Right lobe of liver (tissue), 6 donors: ENCODE measurements at regions of chr19 and their contacts with region 1.

Region 1: DNA sequence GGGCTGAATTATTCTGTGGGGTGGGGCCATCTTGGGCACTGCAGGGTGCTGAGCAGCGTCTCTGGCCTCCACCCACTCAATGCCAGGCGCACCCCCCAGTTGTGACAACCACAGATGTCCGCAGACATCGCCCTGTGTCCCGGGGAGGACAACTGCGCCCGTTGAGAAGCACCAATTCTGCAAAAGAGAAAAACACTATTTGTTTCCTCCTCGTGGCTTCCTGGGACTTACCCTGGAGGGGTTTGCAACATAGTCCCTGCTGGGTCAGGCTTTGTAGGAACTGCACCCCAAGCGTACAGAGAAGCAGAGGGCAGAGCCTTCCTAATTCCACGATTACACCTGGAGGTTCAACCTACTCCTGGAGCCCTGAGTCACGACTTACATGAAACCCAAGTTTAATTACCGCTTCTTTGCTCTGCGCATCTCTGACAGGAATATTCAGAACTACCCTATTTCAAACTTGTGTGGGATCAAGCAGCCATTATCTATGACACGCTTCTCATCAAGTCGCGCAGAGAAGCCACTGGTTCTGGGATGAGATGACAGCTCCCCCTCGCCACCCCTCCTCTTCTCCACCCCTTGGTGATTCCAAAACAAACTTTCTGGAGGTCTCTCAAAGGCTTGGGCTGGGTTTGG is 11.1 kb upstream of the SLC39A3 start:
- DNase-seq: no peak
- ATAC-seq: no peak
- H3K4me3 ChIP-seq: no peak overlapping the region
- H3K27ac ChIP-seq: no peak overlapping the region
- H3K4me1 ChIP-seq: no peaks in the 10 kb centered on the region
- H3K27me3 ChIP-seq: no peaks in the 10 kb centered on the region
- CTCF ChIP-seq: no peak
- POLR2A ChIP-seq: no peak

Region 2: GRCh38 chr19:2648528-2648937 is 102.4 kb before region 1 on chr19:
- intact Hi-C with region 1: loop called in 1 of 2 experiments (anchors 10 kb)
- DNase-seq: peak; percentile 75 to 85 (median 80)
- ATAC-seq: peak; percentile 97 to 100 (median 98)
- H3K4me3 ChIP-seq: no peak overlapping the region
- H3K27ac ChIP-seq: no peak overlapping the region
- H3K4me1 ChIP-seq: no peaks in the 10 kb centered on the region
- H3K27me3 ChIP-seq: no peaks in the 10 kb centered on the region
- CTCF ChIP-seq: peak; percentile 81 to 97 (median 92)
- POLR2A ChIP-seq: no peak

Region 3: DNA sequence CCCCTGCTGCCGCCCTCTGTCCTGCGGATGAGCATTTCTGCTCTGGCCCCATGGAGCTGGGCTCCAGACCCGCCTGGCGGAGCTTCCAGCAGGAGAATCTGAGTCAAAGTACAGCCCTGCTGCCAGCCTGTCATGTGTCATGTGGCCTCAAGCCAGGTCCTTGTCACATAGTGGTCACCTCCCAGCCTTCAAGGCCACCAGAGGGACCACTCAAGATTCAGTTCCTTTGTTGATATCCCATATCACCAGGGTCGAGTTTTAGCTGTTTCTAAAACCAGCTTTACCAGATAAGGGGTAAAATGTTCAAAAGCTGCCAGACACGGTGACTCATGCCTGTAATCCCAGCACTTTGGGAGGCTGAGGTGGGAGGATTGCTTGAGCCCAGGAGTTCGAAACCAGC is 47.8 kb after region 1 on chr19:
- intact Hi-C with region 1: no loop called
- DNase-seq: peak in 1 of 3 donors; percentile 69
- ATAC-seq: peak; percentile 49 to 71 (median 68)
- H3K4me3 ChIP-seq: no peak overlapping the region
- H3K27ac ChIP-seq: no peak overlapping the region
- H3K4me1 ChIP-seq: peaks cover 0 to 10% (median 0%) of the 10 kb centered on the region in 4 donors
- H3K27me3 ChIP-seq: no peaks in the 10 kb centered on the region
- CTCF ChIP-seq: no peak
- POLR2A ChIP-seq: no peak